Breast epithelium (tissue), 4 donors: ENCODE measurements at regions of chr9 and their contacts with region 1.

Region 1: GRCh38 chr9:76691517-76692313 is 72.5 kb upstream of the PCA3 start:
- DNase-seq: no peak
- H3K4me3 ChIP-seq: peak overlapping the region; percentile 31 to 59 (median 38)
- H3K27ac ChIP-seq: no peak overlapping the region
- H3K4me1 ChIP-seq: no peaks in the 10 kb centered on the region
- H3K27me3 ChIP-seq: no peaks in the 10 kb centered on the region
- CTCF ChIP-seq: no peak
- POLR2A ChIP-seq: no peak

Region 2: DNA sequence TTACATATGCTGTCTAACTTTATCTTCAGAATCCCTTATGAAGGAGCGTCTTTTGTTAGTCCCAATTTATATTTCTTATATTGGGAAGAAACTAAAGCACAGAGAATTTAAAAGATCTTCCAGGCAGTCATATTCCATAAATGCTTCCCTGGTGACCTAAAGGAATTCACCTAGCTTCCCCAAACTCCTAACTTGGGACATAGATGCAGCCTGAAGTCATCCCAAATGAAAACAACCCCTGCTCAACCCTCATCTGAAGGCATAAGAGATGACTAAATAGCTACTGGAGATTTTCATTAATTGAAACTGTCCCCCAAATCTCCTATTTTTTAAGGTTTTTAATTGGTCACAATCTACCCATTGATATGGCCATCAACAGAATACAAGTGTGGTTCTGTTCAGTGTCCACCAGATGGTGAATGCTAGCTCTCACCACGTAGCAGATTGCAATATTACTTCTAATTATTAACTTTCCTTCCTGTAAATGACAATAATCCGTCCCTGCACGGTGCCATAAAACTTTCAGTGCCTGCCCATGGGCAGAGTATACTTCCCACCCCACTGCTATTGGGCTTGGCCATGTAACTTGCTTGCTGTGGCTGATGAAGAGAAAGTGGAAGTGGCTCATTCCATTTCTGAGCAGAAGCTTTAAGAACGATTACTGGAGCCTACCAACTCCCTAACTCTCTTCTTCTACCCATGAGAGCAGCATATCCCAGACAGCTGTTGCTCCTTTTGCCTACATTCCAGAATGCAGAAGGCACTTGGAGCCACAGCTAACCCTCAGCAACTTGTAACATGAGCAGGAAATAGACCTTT is 195.5 kb after region 1 on chr9:
- intact Hi-C with region 1: loop called (anchors 10 kb)
- DNase-seq: no peak
- H3K4me3 ChIP-seq: no peak overlapping the region
- H3K27ac ChIP-seq: no peak overlapping the region
- H3K4me1 ChIP-seq: no peaks in the 10 kb centered on the region
- H3K27me3 ChIP-seq: no peaks in the 10 kb centered on the region
- CTCF ChIP-seq: no peak
- POLR2A ChIP-seq: no peak

Region 3: DNA sequence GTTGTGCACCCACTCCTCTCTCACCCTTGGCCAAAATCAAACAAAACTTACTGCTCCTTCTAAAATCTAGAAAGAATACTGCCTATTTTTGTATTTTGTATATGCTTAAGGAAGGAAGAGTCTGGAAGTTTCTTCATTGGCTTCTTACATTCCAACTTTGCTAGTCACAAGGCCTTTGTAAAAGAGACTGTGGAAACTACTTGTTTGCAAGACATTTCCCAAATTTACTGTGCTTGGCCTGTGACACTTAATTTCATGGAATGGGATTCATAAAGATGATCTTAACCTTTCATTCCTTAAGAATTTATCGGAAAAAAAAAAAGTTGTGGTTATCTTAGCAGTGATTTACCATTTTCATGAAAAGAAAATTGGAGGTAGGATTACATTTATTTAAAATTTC is 694.5 kb after region 1 on chr9:
- intact Hi-C with region 1: no loop called
- DNase-seq: no peak
- H3K4me3 ChIP-seq: no peak overlapping the region
- H3K27ac ChIP-seq: no peak overlapping the region
- H3K4me1 ChIP-seq: no peaks in the 10 kb centered on the region
- H3K27me3 ChIP-seq: no peaks in the 10 kb centered on the region
- CTCF ChIP-seq: no peak
- POLR2A ChIP-seq: no peak